ENCODE measurements at regions of chr14 and their contacts with region 1.

Region 1: DNA sequence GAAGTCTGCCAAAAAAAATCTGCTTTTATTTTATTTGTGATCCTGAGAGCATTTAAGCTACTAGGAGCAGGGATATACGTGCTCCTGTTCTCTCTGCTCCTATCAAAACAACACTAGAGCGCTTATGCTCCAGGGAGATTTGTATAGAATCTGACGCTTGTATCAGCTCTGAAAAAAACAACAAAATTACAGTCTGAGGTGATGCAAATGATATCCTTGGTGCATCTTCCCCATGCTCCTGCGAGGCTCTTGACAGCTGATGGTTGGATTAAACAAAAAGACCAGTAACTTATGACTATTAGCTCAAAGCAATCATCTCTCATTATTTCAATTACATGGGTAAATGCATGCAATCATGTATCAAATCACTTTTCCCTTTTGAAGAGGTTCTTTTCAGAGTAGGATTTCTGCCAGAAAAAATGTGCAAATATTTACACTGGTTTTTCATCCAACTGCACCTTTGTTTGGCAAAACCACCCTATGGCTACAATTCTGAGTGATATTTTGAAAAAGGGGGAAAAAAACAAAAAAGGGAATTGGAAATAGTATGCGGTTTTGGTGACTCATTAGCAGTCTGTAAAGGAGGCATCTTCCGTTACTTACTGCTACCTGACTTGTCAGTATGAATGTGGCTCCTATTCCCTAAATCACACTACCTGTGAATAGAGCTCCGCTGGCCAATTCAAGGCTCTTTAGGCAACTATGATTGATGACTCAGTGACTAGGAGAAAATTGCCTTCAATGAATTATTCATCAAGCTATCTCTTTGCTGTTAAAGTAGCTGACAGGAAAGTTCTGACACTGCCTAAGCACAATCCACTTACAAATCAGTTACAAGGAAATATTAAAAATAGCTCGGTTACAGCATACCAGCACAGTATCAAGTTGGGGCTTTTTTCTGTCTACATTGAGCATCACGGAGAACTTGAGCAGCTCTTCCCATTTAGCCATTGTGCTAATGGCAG is 450.0 kb downstream of the FOXG1 start:
- DNase-seq: peak; percentile 85
- ATAC-seq: peak; percentile 93
- H3K4me3 ChIP-seq: no peak overlapping the region
- H3K27ac ChIP-seq: peak overlapping the region; percentile 14; the same call in 1 of the 2 replicates
- H3K4me1 ChIP-seq: peaks cover 30% of the 10 kb centered on the region
- H3K27me3 ChIP-seq: peaks cover 13% of the 10 kb centered on the region; the same call in 1 of the 2 replicates
- CTCF ChIP-seq: no peak

Region 2: DNA sequence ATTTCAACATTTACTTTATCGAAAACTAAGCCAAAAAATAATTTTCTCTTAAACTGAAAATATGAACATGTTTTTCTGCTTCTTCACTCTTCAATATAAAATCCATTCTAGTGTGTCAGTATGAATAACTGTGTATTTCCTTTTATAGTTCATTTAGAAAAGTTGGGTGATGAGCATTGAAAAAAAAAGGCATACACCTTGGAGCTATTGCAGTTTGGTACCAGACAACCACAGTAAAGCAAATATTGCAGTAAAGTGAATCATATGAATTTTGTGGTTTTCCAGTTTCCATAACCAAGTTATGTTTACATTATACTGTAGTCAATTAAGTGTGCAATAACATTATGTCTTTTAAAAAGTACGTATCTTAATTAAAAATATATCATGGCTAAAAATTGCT is 644.9 kb before region 1 on chr14:
- CTCF ChIA-PET with region 1: no interaction called
- POLR2A ChIA-PET with region 1: no interaction called
- intact Hi-C with region 1: no loop called
- DNase-seq: peak; percentile 92
- ATAC-seq: peak; percentile 85
- H3K4me3 ChIP-seq: no peak overlapping the region
- H3K27ac ChIP-seq: peak overlapping the region; percentile 26
- H3K4me1 ChIP-seq: peaks cover 27% of the 10 kb centered on the region
- H3K27me3 ChIP-seq: no peaks in the 10 kb centered on the region
- CTCF ChIP-seq: no peak

Region 3: GRCh38 chr14:28676479-28676878 is 540.1 kb before region 1 on chr14:
- CTCF ChIA-PET with region 1: no interaction called
- POLR2A ChIA-PET with region 1: no interaction called
- intact Hi-C with region 1: loop called (anchors 5 kb)
- DNase-seq: peak; percentile 98
- ATAC-seq: peak; percentile 96
- H3K4me3 ChIP-seq: peak overlapping the region; percentile 13; the same call in 1 of the 2 replicates
- H3K27ac ChIP-seq: peak overlapping the region; percentile 76
- H3K4me1 ChIP-seq: peaks cover 58% of the 10 kb centered on the region
- H3K27me3 ChIP-seq: no peaks in the 10 kb centered on the region
- CTCF ChIP-seq: no peak

Region 4: DNA sequence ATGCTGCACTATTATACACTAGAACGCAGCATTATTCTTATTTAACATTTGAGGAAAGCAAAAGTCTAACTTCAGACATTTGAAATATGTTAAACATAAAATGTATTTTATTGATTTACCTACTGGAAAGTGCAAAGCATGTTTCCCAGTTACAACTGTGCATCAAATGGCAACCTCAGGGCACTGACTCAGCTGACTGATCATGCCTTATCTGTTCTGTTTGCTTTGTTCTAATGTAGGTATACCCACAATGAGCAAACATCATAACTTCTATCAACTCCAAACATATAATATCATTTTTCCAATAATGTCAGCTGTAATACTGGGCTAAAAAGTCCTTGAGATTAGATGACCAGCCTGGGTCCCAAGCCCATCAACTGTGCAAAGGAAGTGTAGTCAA is 19.0 kb before region 1 on chr14:
- CTCF ChIA-PET with region 1: no interaction called
- POLR2A ChIA-PET with region 1: no interaction called
- intact Hi-C with region 1: loop called (anchors 2 kb)
- DNase-seq: peak; percentile 31
- ATAC-seq: peak; percentile 92
- H3K4me3 ChIP-seq: no peak overlapping the region
- H3K27ac ChIP-seq: no peak overlapping the region
- H3K4me1 ChIP-seq: peaks cover 6% of the 10 kb centered on the region; the same call in 1 of the 2 replicates
- H3K27me3 ChIP-seq: no peaks in the 10 kb centered on the region
- CTCF ChIP-seq: no peak

Region 5: GRCh38 chr14:29242755-29243754 is 26.5 kb after region 1 on chr14:
- CTCF ChIA-PET with region 1: no interaction called
- POLR2A ChIA-PET with region 1: interaction called, 3 read pairs
- intact Hi-C with region 1: loop called (anchors 1 kb)
- DNase-seq: peak; percentile 23
- ATAC-seq: no peak
- H3K4me3 ChIP-seq: no peak overlapping the region
- H3K27ac ChIP-seq: no peak overlapping the region
- H3K4me1 ChIP-seq: peaks cover 30% of the 10 kb centered on the region
- H3K27me3 ChIP-seq: no peaks in the 10 kb centered on the region
- CTCF ChIP-seq: no peak